Mammary epithelial cell (primary cell): ENCODE measurements at regions of chr14 and their contacts with region 1.

Region 1: GRCh38 chr14:55899531-55899930 is 218.7 kb upstream of the PELI2 start:
- DNase-seq: no peak
- H3K4me3 ChIP-seq: no peak overlapping the region
- H3K27ac ChIP-seq: no peak overlapping the region
- H3K4me1 ChIP-seq: no peaks in the 10 kb centered on the region
- H3K27me3 ChIP-seq: no peaks in the 10 kb centered on the region
- CTCF ChIP-seq: no peak

Region 2: DNA sequence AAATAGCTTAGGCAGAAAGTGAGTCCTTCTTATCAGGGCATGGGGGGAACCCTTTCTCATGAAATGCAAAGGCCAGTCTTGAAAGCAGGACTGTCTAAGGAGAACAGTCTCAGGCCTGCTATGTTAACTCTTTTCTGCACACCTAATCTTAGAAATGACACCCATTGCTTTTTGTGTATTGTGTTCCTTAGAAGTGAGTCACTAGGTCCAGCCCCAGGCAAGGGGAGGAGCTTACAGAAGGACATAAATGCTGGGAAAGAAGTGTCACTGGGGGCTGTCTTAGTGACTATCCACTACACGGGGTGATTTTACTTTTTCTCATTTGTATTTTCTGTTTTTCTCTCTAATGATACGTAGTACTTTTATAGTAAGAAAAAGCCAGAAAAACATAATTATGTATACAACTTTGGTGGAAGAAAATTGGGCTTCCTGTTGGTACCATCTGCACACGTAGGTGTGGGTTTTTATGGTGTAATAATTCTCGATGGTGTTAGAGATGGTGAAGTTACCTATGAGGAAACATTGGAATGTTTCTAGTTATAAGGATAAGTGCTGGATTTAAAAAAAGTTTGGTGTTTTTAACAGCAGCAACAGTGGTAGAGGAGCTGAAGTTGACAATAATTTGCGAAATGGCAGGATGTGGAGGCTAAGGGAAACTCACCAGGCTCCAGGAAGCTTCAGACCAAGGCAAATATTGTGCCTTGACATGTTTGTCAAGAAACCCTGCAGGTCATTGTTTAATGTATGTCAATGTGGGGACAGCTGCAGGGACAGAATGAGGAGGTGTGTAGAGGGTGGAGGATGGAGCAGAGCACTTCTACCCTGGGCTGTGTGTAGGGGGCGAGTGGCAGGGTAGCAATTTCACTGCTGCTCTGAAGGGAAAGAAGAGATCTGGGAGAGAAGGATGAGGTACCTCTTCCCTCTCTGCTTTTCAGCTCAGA is 104.6 kb before region 1 on chr14:
- CTCF ChIA-PET with region 1: no interaction called
- dilution Hi-C with region 1: loop called (anchors 5 kb)
- in situ Hi-C with region 1: no loop called
- intact Hi-C with region 1: no loop called
- DNase-seq: peak; percentile 52
- H3K4me3 ChIP-seq: no peak overlapping the region
- H3K27ac ChIP-seq: no peak overlapping the region
- H3K4me1 ChIP-seq: peaks cover 8% of the 10 kb centered on the region
- H3K27me3 ChIP-seq: no peaks in the 10 kb centered on the region
- CTCF ChIP-seq: no peak

Region 3: GRCh38 chr14:55846826-55847446 is 52.6 kb before region 1 on chr14:
- CTCF ChIA-PET with region 1: no interaction called
- dilution Hi-C with region 1: loop called (anchors 5 kb)
- in situ Hi-C with region 1: no loop called
- intact Hi-C with region 1: no loop called
- DNase-seq: no peak
- H3K4me3 ChIP-seq: no peak overlapping the region
- H3K27ac ChIP-seq: no peak overlapping the region
- H3K4me1 ChIP-seq: peaks cover 5% of the 10 kb centered on the region
- H3K27me3 ChIP-seq: no peaks in the 10 kb centered on the region
- CTCF ChIP-seq: no peak